ENCODE measurements at regions of chr7 and their contacts with region 1.

Region 1: DNA sequence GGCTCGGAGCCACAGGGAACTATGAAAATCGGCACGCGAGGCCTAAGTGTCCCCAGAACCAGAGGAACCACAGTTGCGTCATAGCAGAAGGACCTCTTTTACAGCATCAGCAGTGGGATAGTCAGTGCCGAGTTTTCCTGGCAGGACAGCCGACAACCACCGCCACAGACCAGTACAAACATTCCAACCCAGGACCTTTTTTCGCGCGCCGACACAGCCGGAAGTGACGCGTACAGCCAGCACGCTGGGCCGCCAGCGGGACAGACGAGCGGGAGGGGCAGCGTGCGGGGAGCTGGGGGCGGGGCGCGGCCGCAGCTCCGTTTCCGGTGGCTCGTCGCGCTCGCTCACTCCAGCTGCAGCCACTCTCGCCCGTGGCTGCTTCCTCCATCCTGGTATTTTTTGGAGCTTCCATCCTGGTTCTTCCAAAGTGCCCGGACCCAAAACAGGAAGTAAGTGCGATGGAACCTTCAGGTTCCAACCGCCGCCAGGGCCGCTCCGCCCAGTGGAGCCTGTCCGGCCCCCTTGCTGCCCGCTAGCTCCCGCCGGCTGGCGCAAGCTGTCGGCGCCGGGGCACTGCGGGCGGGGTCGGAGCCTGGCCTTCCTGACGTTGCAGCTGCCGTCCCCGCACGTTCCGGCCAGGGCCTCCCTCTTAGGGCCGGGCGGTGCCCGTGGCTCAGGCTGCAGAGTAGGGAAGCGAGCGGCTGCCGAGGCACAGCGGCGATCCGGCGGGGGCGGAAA is at the start of gene DMTF1:
- DNase-seq: peak; percentile 53
- ATAC-seq: peak; percentile 83
- H3K4me3 ChIP-seq: peak within 1 kb of the TSS; percentile 91
- H3K27ac ChIP-seq: peak within 1 kb of the TSS; percentile 99
- H3K4me1 ChIP-seq: no peaks in the 10 kb centered on the region
- H3K27me3 ChIP-seq: no peaks in the 10 kb centered on the region
- CTCF ChIP-seq: no peak
- EP300 ChIP-seq: peak in 1 of 2 experiments; percentile 48; a peak in 1 of 4 replicates
- POLR2A ChIP-seq: peak; percentile 96
- RAD21 ChIP-seq: no peak
- polyA plus RNA-seq, gene DMTF1: 24.3 to 28.4 TPM

Region 2: GRCh38 chr7:86932038-86932512 is 220.2 kb before region 1 on chr7:
- CTCF ChIA-PET with region 1: interaction called, 42 read pairs
- POLR2A ChIA-PET with region 1: no interaction called
- RAD21 ChIA-PET with region 1: interaction called, 11 read pairs
- SMC1A ChIA-PET with region 1: interaction called, 20 read pairs
- in situ Hi-C with region 1: loop called (anchors 5 kb)
- intact Hi-C with region 1: no loop called
- DNase-seq: no peak
- ATAC-seq: peak; percentile 34; the same call in 1 of the 3 replicates
- H3K4me3 ChIP-seq: no peak overlapping the region
- H3K27ac ChIP-seq: no peak overlapping the region
- H3K4me1 ChIP-seq: peaks cover 10% of the 10 kb centered on the region
- H3K27me3 ChIP-seq: no peaks in the 10 kb centered on the region
- CTCF ChIP-seq: no peak
- EP300 ChIP-seq: no peak
- POLR2A ChIP-seq: no peak
- RAD21 ChIP-seq: no peak

Region 3: DNA sequence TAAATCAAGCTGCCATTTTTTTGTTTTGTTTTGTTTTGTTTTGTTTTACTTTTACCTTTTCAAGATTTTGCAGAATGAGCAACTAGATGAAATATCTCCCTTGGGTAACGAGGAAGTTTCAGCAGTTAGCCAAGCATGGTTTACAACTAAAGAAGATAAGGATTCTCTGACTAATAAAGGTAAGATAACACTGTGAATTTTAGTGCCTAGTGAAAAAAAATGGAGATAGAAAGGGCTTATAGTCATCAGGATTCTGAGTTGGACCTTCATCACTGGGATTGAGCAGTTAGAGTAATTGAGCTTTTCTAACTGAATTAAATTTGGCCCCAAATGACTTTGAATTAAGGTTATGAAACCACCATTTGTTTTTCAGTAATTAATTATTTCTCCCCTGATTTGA is 21.2 kb after region 1 on chr7:
- CTCF ChIA-PET with region 1: interaction called, 6 read pairs
- POLR2A ChIA-PET with region 1: interaction called, 6 read pairs
- RAD21 ChIA-PET with region 1: interaction called, 13 read pairs
- SMC1A ChIA-PET with region 1: interaction called, 13 read pairs
- in situ Hi-C with region 1: no loop called
- intact Hi-C with region 1: no loop called
- DNase-seq: no peak
- ATAC-seq: no peak
- H3K4me3 ChIP-seq: no peak overlapping the region
- H3K27ac ChIP-seq: no peak overlapping the region
- H3K4me1 ChIP-seq: no peaks in the 10 kb centered on the region
- H3K27me3 ChIP-seq: no peaks in the 10 kb centered on the region
- CTCF ChIP-seq: no peak
- EP300 ChIP-seq: no peak
- POLR2A ChIP-seq: no peak
- RAD21 ChIP-seq: no peak

Region 4: GRCh38 chr7:87213811-87214210 is 61.5 kb after region 1 on chr7:
- CTCF ChIA-PET with region 1: interaction called, 24 read pairs
- POLR2A ChIA-PET with region 1: interaction called, 215 read pairs
- RAD21 ChIA-PET with region 1: interaction called, 153 read pairs
- SMC1A ChIA-PET with region 1: interaction called, 112 read pairs
- in situ Hi-C with region 1: no loop called
- intact Hi-C with region 1: loop called (anchors 1 kb)
- DNase-seq: no peak
- ATAC-seq: no peak
- H3K4me3 ChIP-seq: peak overlapping the region; percentile 73
- H3K27ac ChIP-seq: peak overlapping the region; percentile 98
- H3K4me1 ChIP-seq: peaks cover 33% of the 10 kb centered on the region
- H3K27me3 ChIP-seq: no peaks in the 10 kb centered on the region
- CTCF ChIP-seq: no peak
- EP300 ChIP-seq: no peak
- POLR2A ChIP-seq: no peak
- RAD21 ChIP-seq: no peak

Region 5: DNA sequence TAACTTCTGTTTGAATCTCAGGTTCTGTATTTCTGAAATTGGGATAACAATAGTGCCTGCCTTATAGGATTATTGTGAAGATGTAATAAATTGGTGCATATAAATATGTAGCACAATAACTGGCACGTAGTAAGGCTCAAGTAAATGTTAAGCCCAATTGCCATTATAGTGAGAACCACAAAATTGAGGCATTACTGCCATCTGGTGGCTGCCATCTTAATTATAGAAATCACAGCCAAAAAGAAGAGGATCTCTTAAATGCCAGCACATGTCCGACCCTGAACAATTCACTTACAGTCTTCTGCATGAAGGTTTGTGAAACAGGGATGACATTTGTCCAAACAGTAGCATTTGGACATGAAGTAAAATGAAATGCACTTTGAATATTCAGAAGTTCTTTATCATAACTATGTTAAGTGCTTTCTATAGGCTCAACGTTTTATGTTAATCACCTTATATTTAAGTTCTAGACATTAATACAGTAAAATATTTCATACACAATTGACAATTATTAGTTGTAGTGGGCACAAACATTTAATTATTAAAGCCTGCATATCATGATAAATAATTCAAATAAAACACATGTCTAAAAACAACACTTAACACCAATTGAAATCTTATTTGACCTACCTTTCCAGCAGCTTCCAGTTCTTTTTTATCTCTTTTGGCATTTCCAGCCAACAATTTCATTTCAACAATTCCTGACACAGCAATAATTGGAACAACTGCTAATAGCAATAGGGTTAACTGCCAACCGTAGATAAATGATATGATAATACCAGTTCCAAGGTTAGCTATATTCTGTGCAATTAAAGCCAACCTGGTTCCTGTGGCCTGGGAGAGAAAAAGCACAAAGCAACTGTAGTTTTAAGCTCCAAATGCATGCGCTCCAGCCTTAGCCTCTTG is 264.7 kb after region 1 on chr7:
- CTCF ChIA-PET with region 1: interaction called, 3 read pairs
- POLR2A ChIA-PET with region 1: no interaction called
- RAD21 ChIA-PET with region 1: interaction called, 4 read pairs
- SMC1A ChIA-PET with region 1: interaction called, 5 read pairs
- in situ Hi-C with region 1: no loop called
- intact Hi-C with region 1: loop called (anchors 5 kb)
- DNase-seq: peak; percentile 44
- ATAC-seq: peak; percentile 96
- H3K4me3 ChIP-seq: no peak overlapping the region
- H3K27ac ChIP-seq: no peak overlapping the region
- H3K4me1 ChIP-seq: no peaks in the 10 kb centered on the region
- H3K27me3 ChIP-seq: no peaks in the 10 kb centered on the region
- CTCF ChIP-seq: peak; percentile 55 to 82 (median 61)
- EP300 ChIP-seq: no peak
- POLR2A ChIP-seq: no peak
- RAD21 ChIP-seq: peak; percentile 90

Region 6: GRCh38 chr7:88219781-88220747 is 1067.8 kb after region 1 on chr7 and contains the start of gene SRI:
- CTCF ChIA-PET with region 1: no interaction called
- POLR2A ChIA-PET with region 1: no interaction called
- RAD21 ChIA-PET with region 1: no interaction called
- SMC1A ChIA-PET with region 1: no interaction called
- in situ Hi-C with region 1: no loop called
- intact Hi-C with region 1: loop called (anchors 10 kb)
- DNase-seq: peak; percentile 40
- ATAC-seq: peak; percentile 83
- H3K4me3 ChIP-seq: peak within 1 kb of the TSS; percentile 80
- H3K27ac ChIP-seq: peak within 1 kb of the TSS; percentile 74
- H3K4me1 ChIP-seq: no peaks in the 10 kb centered on the region
- H3K27me3 ChIP-seq: no peaks in the 10 kb centered on the region
- CTCF ChIP-seq: peak; percentile 43 to 73 (median 70); a peak in 5 of 6 replicates
- EP300 ChIP-seq: no peak
- POLR2A ChIP-seq: peak; percentile 95
- RAD21 ChIP-seq: no peak
- polyA plus RNA-seq, gene SRI: 174 to 259 TPM

Measured in GM12878 (cell line).